ENCODE measurements at regions of chr14 and their contacts with region 1.

Region 1: GRCh38 chr14:22112004-22112403 is 438.4 kb upstream of the OR4E1 start:
- DNase-seq: no peak
- H3K4me3 ChIP-seq: no peak overlapping the region
- H3K27ac ChIP-seq: no peak overlapping the region
- H3K27me3 ChIP-seq: no peaks in the 10 kb centered on the region
- CTCF ChIP-seq: peak; percentile 58

Region 2: GRCh38 chr14:22047115-22047514 is 64.9 kb before region 1 on chr14:
- CTCF ChIA-PET with region 1: no interaction called
- POLR2A ChIA-PET with region 1: no interaction called
- DNase-seq: no peak
- H3K4me3 ChIP-seq: no peak overlapping the region
- H3K27ac ChIP-seq: no peak overlapping the region
- H3K27me3 ChIP-seq: no peaks in the 10 kb centered on the region
- CTCF ChIP-seq: no peak

Region 3: GRCh38 chr14:22099942-22100763 is 11.9 kb before region 1 on chr14:
- CTCF ChIA-PET with region 1: interaction called, 18 read pairs
- POLR2A ChIA-PET with region 1: no interaction called
- DNase-seq: peak; percentile 8
- H3K4me3 ChIP-seq: no peak overlapping the region
- H3K27ac ChIP-seq: no peak overlapping the region
- H3K27me3 ChIP-seq: peaks cover 3% of the 10 kb centered on the region
- CTCF ChIP-seq: peak; percentile 49

Region 4: GRCh38 chr14:22122227-22122818 is 10.3 kb after region 1 on chr14:
- CTCF ChIA-PET with region 1: interaction called, 10 read pairs
- POLR2A ChIA-PET with region 1: no interaction called
- DNase-seq: no peak
- H3K4me3 ChIP-seq: no peak overlapping the region
- H3K27ac ChIP-seq: no peak overlapping the region
- H3K27me3 ChIP-seq: no peaks in the 10 kb centered on the region
- CTCF ChIP-seq: peak; percentile 41

Region 5: GRCh38 chr14:23006544-23007419 is 894.8 kb after region 1 on chr14:
- CTCF ChIA-PET with region 1: no interaction called
- POLR2A ChIA-PET with region 1: no interaction called
- DNase-seq: peak; percentile 95
- H3K4me3 ChIP-seq: peak overlapping the region; percentile 80
- H3K27ac ChIP-seq: peak overlapping the region; percentile 92
- H3K27me3 ChIP-seq: no peaks in the 10 kb centered on the region
- CTCF ChIP-seq: peak; percentile 40

Measured in AG04450 (cell line).